PC-9 (cell line): ENCODE measurements at regions of chr12 and their contacts with region 1.

Region 1: DNA sequence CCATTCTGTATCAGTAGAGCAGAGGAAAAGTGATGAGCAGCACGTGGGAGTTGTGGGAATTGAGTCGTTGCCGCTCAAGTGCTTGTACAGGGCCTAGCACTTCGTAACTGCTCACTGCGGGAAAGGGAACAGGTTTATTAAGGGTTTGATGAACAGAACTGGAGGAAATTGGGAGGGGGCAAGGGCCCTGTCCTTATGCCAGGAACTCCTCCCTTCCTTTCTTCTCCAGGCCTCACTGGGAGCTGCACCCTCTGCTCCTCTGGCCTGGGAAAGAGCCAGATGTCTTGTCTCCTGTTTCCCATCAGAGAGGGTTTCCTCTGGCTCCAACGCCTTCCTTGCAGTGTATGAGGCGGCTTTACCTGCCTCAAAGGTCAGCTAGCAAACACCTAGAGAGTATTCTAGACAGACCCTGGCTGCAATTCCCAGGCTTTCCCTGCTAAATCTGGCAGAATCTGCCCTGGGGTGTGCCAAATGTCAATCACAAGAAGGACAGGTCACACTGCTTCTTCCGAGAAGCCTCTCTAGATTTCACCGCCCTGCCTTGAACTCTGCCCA is 78.4 kb downstream of the NTF3 start:
- DNase-seq: no peak
- H3K4me3 ChIP-seq: no peak overlapping the region
- H3K27ac ChIP-seq: no peak overlapping the region
- H3K4me1 ChIP-seq: no peaks in the 10 kb centered on the region
- H3K27me3 ChIP-seq: peaks cover 82% of the 10 kb centered on the region
- CTCF ChIP-seq: no peak

Region 2: GRCh38 chr12:5996459-5996858 is 486.1 kb after region 1 on chr12:
- CTCF ChIA-PET with region 1: interaction called, 23 read pairs
- POLR2A ChIA-PET with region 1: no interaction called
- intact Hi-C with region 1: no loop called
- DNase-seq: no peak
- H3K4me3 ChIP-seq: no peak overlapping the region
- H3K27ac ChIP-seq: no peak overlapping the region
- H3K4me1 ChIP-seq: no peaks in the 10 kb centered on the region
- H3K27me3 ChIP-seq: peaks cover 30% of the 10 kb centered on the region
- CTCF ChIP-seq: no peak